Mammary epithelial cell (primary cell): ENCODE measurements at regions of chr20 and their contacts with region 1.

Region 1: GRCh38 chr20:54054516-54054915 is 15.9 kb downstream of the BCAS1 start:
- DNase-seq: peak; percentile 31
- H3K4me3 ChIP-seq: no peak overlapping the region
- H3K27ac ChIP-seq: no peak overlapping the region
- H3K4me1 ChIP-seq: no peaks in the 10 kb centered on the region
- H3K27me3 ChIP-seq: no peaks in the 10 kb centered on the region
- CTCF ChIP-seq: no peak

Region 2: DNA sequence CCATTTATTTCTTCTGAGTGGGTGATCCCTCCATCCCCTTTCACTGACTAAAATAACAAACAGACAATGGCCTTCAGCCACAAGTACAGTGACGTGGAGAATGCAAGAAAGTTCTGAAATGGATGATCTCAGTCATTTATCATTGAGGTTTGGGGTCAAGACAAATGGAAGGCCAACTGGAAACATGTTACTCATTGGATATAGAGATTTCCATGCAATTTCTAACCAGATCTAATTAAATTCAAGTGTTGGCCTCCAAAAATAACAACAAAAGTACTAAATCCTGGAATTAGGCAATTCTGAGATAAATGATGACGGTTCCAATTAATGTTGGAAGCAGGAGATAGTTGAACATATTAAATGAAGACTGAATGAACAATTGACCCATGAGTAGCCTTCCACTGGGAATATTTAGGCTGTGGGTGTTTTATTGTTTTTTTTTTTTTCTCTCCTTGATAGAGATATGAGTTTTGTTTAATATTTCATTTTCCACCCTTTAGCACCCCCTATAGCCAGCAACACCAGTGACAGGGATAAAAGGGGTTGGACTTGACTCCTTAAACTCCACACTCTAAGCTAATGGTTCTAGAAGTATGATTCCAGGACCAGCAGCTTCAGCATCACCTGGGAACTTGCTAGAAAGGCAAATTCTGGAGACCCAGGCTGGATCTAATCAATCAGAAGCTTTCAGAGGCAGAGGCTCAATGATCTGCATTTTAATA is 96.9 kb before region 1 on chr20:
- CTCF ChIA-PET with region 1: no interaction called
- dilution Hi-C with region 1: loop called (anchors 5 kb)
- in situ Hi-C with region 1: no loop called
- intact Hi-C with region 1: no loop called
- DNase-seq: no peak
- H3K4me3 ChIP-seq: no peak overlapping the region
- H3K27ac ChIP-seq: no peak overlapping the region
- H3K4me1 ChIP-seq: no peaks in the 10 kb centered on the region
- H3K27me3 ChIP-seq: no peaks in the 10 kb centered on the region
- CTCF ChIP-seq: peak; percentile 15 to 23

Region 3: GRCh38 chr20:54004445-54004844 is 50.1 kb before region 1 on chr20:
- CTCF ChIA-PET with region 1: no interaction called
- dilution Hi-C with region 1: no loop called
- in situ Hi-C with region 1: no loop called
- intact Hi-C with region 1: no loop called
- DNase-seq: peak; percentile 1
- H3K4me3 ChIP-seq: no peak overlapping the region
- H3K27ac ChIP-seq: no peak overlapping the region
- H3K4me1 ChIP-seq: no peaks in the 10 kb centered on the region
- H3K27me3 ChIP-seq: peaks cover 2% of the 10 kb centered on the region
- CTCF ChIP-seq: no peak

Region 4: DNA sequence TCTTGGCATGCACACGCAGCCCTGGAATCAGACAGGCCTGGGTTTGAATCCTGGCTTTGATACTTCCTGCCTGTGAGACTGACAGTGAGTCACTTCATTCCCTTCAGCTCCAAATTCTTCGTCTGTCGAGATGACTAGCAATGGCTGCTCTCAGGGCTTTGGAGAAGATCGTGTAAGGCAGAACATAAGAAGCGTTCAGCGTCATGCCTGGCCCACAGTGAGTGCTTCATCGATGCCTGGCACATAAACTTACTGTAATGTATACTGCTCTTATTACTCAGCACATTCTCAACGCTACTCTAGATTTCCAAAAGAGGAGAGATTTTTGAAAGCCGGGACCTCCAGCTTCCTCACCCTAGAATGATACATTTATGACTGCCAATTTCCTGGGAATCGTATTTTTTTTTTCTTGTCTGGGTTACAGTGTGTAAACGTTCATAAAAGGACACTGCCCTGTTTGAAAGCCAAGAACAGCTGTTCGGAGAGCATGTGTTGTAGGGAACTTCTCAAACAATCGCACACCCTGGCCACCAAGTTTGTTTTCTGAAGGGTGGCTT is 32.0 kb after region 1 on chr20:
- CTCF ChIA-PET with region 1: no interaction called
- dilution Hi-C with region 1: loop called (anchors 5 kb)
- in situ Hi-C with region 1: no loop called
- intact Hi-C with region 1: no loop called
- DNase-seq: no peak
- H3K4me3 ChIP-seq: no peak overlapping the region
- H3K27ac ChIP-seq: no peak overlapping the region
- H3K4me1 ChIP-seq: no peaks in the 10 kb centered on the region
- H3K27me3 ChIP-seq: no peaks in the 10 kb centered on the region
- CTCF ChIP-seq: no peak